ENCODE measurements at regions of chr3 and their contacts with region 1.

Region 1: GRCh38 chr3:194003125-194004057 is 132.6 kb upstream of the HES1 start:
- DNase-seq: peak; percentile 87
- ATAC-seq: peak; percentile 97
- H3K4me3 ChIP-seq: peak overlapping the region; percentile 34
- H3K27ac ChIP-seq: no peak overlapping the region
- H3K4me1 ChIP-seq: peaks cover 8% of the 10 kb centered on the region; the same call in 1 of the 2 replicates
- H3K27me3 ChIP-seq: peaks cover 29% of the 10 kb centered on the region
- CTCF ChIP-seq: no peak
- POLR2A ChIP-seq: no peak; the same call in 1 of the 2 replicates
- RAD21 ChIP-seq: peak; percentile 23

Region 2: DNA sequence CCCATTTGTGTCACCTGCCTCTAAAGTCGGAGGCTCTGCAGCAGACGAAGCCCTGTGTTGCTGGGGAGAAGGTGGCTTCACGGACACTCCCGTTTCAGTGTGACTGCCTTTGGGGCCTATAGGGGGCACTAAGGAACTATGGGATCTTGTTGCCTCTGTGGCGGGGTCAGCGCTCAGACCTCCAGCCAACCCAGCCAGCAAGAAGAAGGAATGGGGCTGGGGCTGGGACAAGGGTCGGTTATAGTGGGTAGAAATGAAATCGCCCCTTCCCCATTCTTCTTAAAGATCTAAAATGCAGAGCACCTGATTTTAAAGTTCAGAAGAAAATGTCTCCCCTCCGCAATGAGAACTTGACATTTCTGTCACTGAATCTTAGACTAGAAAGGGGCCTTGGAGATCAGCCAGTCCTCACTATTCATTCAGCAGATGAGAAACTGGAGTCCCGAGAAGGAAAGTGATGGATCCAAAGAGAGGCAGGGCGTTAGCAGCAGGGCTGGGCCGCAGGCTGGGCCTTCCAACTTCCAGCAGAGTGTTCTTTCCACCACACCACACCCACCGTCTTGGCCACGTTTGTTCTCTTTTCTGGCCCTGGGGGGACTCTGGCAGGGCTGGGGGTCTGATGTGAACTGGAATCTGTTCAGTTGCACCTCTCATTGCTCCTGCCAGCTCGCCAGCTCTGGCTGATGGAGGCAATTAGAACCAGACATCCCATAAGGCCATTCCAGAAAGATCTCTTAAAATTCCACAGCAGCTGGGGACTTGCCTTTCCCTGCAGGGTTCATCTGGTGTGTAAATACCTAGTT is 215.0 kb before region 1 on chr3:
- CTCF ChIA-PET with region 1: no interaction called
- POLR2A ChIA-PET with region 1: no interaction called
- dilution Hi-C with region 1: no loop called
- in situ Hi-C with region 1: no loop called
- intact Hi-C with region 1: loop called (anchors 10 kb)
- DNase-seq: peak; percentile 53
- ATAC-seq: peak; percentile 95
- H3K4me3 ChIP-seq: no peak overlapping the region
- H3K27ac ChIP-seq: no peak overlapping the region
- H3K4me1 ChIP-seq: no peaks in the 10 kb centered on the region
- H3K27me3 ChIP-seq: peaks cover 46% of the 10 kb centered on the region
- CTCF ChIP-seq: peak; percentile 76
- POLR2A ChIP-seq: no peak
- RAD21 ChIP-seq: peak; percentile 93

Measured in IMR-90 (cell line).